Colonic mucosa (tissue), 4 donors: ENCODE measurements at regions of chr12 and their contacts with region 1.

Region 1: DNA sequence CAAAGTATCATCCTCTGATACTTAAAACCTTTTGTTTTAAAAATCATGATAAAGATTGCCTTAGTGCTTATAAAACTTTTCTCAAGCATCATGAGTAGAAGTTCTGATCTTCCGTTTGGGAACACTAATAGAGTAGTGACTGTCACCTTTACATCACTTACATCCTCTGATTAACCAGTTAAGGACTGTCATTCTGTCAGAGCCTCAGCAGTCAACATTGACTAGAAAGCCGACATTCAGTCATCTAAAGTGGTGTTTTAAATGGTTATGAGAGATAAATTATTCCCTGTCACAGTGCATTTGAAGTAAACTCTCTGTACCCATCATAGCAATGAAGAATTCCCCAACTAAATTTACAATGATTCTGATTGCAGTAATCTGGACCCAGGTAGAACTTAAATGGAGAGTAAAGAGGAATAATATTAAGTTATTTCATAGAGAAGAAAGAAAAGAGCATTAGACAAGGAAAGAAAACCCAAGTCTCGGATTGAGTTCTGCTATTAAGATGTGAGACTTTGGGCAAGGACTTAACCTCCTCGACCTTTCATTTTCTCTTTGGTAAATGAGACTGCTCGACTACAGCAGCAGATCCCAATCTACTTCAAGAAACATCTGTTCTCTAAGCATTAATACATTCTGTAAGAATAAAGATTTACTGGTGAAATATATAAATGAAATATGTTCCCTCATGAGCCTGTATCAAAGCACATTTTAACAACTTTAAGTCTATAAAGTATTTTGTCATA is 563.9 kb upstream of the LMO3 start:
- DNase-seq: no peak
- H3K4me3 ChIP-seq: no peak overlapping the region
- H3K27ac ChIP-seq: no peak overlapping the region
- H3K4me1 ChIP-seq: no peaks in the 10 kb centered on the region
- H3K27me3 ChIP-seq: no peaks in the 10 kb centered on the region
- CTCF ChIP-seq: no peak

Region 2: GRCh38 chr12:16499611-16500010 is 670.3 kb before region 1 on chr12:
- intact Hi-C with region 1: loop called (anchors 5 kb)
- DNase-seq: no peak
- H3K4me3 ChIP-seq: no peak overlapping the region
- H3K27ac ChIP-seq: no peak overlapping the region
- H3K4me1 ChIP-seq: no peaks in the 10 kb centered on the region
- H3K27me3 ChIP-seq: no peaks in the 10 kb centered on the region
- CTCF ChIP-seq: no peak